Heart right ventricle (tissue), 16 donors: ENCODE measurements at regions of chr11 and their contacts with region 1.

Region 1: GRCh38 chr11:72924568-72925190 is 110.5 kb downstream of the ATG16L2 start:
- DNase-seq: no peak
- ATAC-seq: peak in 7 of 8 donors; percentile 45 to 82 (median 51)
- H3K4me3 ChIP-seq: no peak overlapping the region
- H3K27ac ChIP-seq: peak overlapping the region in 2 of 10 donors; percentile 13 to 54
- H3K4me1 ChIP-seq: peaks cover 0 to 64% (median 31%) of the 10 kb centered on the region in 9 donors
- H3K27me3 ChIP-seq: no peaks in the 10 kb centered on the region
- CTCF ChIP-seq: peak; percentile 21 to 75 (median 62)

Region 2: DNA sequence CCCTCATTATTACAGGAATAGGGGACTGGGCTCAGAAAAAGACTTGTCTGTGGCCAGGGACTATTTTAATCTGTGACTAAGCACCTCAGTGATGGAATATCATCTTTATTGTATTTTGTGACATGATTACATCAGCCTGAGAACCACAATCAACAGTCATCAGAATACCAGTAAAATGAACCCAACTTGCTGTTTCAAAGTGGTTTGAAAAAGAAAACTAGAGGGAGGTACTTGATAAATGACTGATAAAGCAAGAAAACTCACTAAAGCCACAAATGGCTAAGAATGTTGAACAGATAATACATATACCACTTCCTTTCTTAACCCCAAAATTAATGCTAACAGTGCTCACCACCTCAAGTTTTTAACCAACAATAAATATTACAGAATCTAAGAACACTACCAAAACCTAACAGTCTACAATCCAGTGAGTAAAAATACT is 45.2 kb after region 1 on chr11:
- intact Hi-C with region 1: loop called in 1 of 10 experiments (anchors 10 kb)
- DNase-seq: no peak
- ATAC-seq: no peak
- H3K4me3 ChIP-seq: no peak overlapping the region
- H3K27ac ChIP-seq: peak overlapping the region in 1 of 10 donors; percentile 67
- H3K4me1 ChIP-seq: peaks cover 0 to 60% (median 30%) of the 10 kb centered on the region in 9 donors
- H3K27me3 ChIP-seq: no peaks in the 10 kb centered on the region
- CTCF ChIP-seq: no peak

Region 3: DNA sequence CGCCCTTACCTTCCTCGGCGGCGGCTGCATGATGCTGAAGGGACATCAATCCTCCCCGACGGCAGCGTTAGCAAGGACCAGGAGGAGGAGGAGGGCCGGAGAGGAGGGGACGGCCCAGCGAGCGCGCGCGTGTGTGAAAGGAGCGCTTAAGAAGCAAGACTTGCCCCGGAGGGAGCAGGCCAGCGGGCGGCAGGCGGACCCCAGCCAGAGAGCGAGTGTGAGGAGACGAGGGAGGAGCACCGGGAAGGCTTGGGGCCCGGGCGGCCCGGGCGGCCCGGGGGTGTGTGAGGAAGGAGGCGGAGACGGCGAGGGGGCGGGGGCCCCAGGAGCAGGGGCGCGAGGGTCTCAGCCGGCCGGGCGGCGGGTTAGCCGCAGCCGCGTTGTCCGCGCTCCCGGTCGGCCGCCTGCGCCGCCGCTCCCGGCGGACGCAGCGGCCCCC is 217.2 kb after region 1 on chr11:
- intact Hi-C with region 1: loop called in 5 of 10 experiments (anchors 5 to 10 kb)
- DNase-seq: peak; percentile 80 to 86
- ATAC-seq: peak; percentile 31 to 59 (median 49)
- H3K4me3 ChIP-seq: peak overlapping the region; percentile 91 to 98 (median 94)
- H3K27ac ChIP-seq: peak overlapping the region; percentile 96 to 99 (median 98)
- H3K4me1 ChIP-seq: peaks cover 0 to 77% (median 52%) of the 10 kb centered on the region in 9 donors
- H3K27me3 ChIP-seq: no peaks in the 10 kb centered on the region
- CTCF ChIP-seq: no peak

Region 4: GRCh38 chr11:73177778-73178577 is 253.3 kb after region 1 on chr11:
- intact Hi-C with region 1: loop called in 9 of 10 experiments (anchors 1 to 10 kb)
- DNase-seq: peak; percentile 85 to 88
- ATAC-seq: peak; percentile 60 to 86 (median 74)
- H3K4me3 ChIP-seq: no peak overlapping the region
- H3K27ac ChIP-seq: peak overlapping the region; percentile 69 to 92 (median 86)
- H3K4me1 ChIP-seq: peaks cover 27 to 74% (median 51%) of the 10 kb centered on the region in 9 donors
- H3K27me3 ChIP-seq: no peaks in the 10 kb centered on the region
- CTCF ChIP-seq: peak; percentile 71 to 94 (median 86)

Region 5: DNA sequence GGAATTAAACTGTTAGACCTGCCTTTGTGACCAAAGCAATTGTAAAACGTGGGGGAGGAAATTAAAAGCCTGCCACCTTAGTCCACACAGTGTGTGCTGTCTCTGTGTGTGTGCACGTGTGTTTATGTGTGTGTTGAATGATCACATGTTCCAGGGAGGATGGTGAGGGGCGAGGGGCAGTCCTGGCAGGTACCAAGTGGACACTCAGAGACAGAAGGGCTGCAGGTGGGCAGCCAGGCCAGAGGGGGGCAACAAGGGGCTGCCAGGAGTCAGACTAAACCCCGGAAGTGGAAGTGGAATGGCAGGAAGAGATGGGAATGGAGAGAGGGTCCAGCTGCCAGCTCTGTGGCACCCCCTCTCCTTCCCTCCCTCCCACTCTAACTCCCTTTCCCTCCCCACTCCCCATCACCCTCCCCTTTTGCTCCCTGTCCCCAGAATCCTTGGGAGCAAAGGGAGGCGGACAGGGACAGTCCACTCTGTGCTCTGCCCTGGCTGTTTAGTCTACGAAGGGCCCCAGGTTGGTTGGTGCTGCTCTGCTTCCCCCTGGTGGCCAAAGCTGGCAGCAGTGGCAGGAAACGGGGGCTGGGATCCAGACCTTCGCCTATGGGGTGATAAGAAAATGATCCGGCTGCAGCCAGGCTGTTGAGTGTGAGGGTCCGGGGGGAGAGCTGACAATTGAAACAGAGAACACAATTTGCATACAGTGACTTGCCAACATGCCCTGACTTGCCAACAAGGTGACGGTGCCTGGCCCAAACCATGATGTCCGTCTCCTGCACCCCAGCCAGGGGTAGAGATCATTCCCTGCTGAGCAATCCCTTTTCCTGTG is 317.8 kb after region 1 on chr11:
- intact Hi-C with region 1: loop called in 2 of 10 experiments (anchors 10 kb)
- DNase-seq: peak; percentile 61 to 82
- ATAC-seq: peak; percentile 28 to 68 (median 56)
- H3K4me3 ChIP-seq: peak overlapping the region in 5 of 10 donors; percentile 16 to 45 (median 29)
- H3K27ac ChIP-seq: peak overlapping the region in 5 of 10 donors; percentile 45 to 86 (median 76)
- H3K4me1 ChIP-seq: peaks cover 23 to 56% (median 54%) of the 10 kb centered on the region in 9 donors
- H3K27me3 ChIP-seq: no peaks in the 10 kb centered on the region
- CTCF ChIP-seq: peak; percentile 73 to 98 (median 89)

Region 6: GRCh38 chr11:73288873-73289707 is 364.4 kb after region 1 on chr11:
- intact Hi-C with region 1: loop called in 1 of 10 experiments (anchors 10 kb)
- DNase-seq: peak; percentile 70 to 72
- ATAC-seq: peak; percentile 79 to 89 (median 82)
- H3K4me3 ChIP-seq: peak overlapping the region in 8 of 10 donors; percentile 16 to 47 (median 37)
- H3K27ac ChIP-seq: peak overlapping the region; percentile 5 to 91 (median 60)
- H3K4me1 ChIP-seq: peaks cover 12 to 59% (median 31%) of the 10 kb centered on the region in 9 donors
- H3K27me3 ChIP-seq: no peaks in the 10 kb centered on the region
- CTCF ChIP-seq: peak; percentile 92 to 99 (median 96)